MCF 10A (cell line): ENCODE measurements at regions of chr3 and their contacts with region 1.

Region 1: DNA sequence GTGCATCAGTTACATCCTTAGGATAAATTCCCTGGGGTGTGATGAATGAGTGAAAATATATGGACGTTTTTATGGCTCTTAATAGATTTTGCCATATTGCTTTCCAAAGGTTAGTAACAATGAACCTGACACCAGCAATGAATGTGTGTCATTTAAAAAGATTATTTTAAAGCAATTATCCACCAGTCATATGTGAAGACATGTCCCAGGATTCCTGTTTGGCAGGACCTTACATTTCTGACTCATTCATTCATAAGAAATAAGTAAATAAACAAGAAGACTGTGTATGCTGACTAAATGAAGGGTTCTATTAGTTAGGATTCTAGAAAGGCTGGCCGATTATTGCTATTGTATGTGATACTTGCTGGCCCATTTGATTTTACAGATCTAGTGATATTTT is 201.5 kb downstream of the SOX2 start:
- DNase-seq: peak; percentile 66
- H3K4me3 Mint-ChIP-seq: no peak overlapping the region
- H3K27ac Mint-ChIP-seq: no peak overlapping the region
- H3K4me1 Mint-ChIP-seq: no peaks in the 10 kb centered on the region
- H3K27me3 Mint-ChIP-seq: no peaks in the 10 kb centered on the region
- CTCF ChIP-seq: no peak

Region 2: DNA sequence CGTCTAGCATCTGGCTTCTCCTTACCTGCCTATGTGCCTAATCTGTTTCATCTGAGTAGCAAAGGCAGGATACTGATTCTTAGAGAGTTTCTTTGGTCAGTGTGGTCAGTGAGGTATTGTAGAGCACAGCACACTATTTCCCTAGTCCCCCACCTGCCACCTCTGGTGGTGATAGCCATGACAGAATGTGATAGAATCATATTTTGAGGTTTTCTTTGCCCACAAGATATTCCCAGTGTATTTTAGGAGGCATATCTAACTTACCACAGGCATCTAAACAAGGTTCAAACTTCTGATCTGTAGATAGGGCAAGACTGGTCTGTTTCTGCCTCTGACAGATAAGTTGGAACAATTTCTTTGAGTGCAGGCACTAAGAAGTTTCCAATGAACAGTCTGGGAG is 13.6 kb before region 1 on chr3:
- CTCF ChIA-PET with region 1: no interaction called
- POLR2A ChIA-PET with region 1: no interaction called
- intact Hi-C with region 1: loop called (anchors 1 kb)
- DNase-seq: no peak
- H3K4me3 Mint-ChIP-seq: no peak overlapping the region
- H3K27ac Mint-ChIP-seq: no peak overlapping the region
- H3K4me1 Mint-ChIP-seq: no peaks in the 10 kb centered on the region
- H3K27me3 Mint-ChIP-seq: no peaks in the 10 kb centered on the region
- CTCF ChIP-seq: no peak

Region 3: GRCh38 chr3:182179631-182180030 is 266.4 kb after region 1 on chr3:
- CTCF ChIA-PET with region 1: no interaction called
- POLR2A ChIA-PET with region 1: no interaction called
- intact Hi-C with region 1: loop called (anchors 10 kb)
- DNase-seq: peak; percentile 10
- H3K4me3 Mint-ChIP-seq: no peak overlapping the region
- H3K27ac Mint-ChIP-seq: no peak overlapping the region
- H3K4me1 Mint-ChIP-seq: peaks cover 12% of the 10 kb centered on the region
- H3K27me3 Mint-ChIP-seq: no peaks in the 10 kb centered on the region
- CTCF ChIP-seq: no peak